GM12878 (cell line): ENCODE measurements at regions of chr6 and their contacts with region 1.

Region 1: DNA sequence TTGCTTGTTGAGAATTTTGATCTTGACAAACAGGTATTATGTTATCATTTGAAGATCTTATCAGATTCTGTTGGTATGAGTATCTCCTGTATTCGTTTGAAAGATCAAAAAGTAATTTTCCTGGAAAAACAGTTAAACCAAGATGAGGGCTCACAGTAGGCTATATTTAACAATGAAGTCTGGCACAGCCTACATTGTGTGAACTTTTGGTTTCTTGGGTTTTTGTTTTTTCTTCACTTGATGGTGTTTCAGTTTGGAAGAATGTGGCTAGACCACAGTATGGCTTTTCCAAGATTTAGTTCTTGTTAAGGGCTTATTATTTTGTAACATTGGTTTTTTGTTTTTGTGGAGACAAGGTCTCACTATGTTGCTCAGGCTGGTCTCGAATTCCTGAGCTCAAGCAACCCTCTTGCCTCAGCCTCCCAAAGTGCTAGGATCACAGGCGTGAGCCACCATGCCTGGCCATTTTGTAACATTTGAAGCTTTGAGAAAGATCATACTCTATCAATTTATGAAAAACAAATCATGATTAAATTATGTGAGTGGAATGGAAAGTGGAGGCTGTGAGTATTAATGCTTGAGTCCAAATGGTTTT is 306.5 kb downstream of the CDKAL1 start:
- DNase-seq: no peak
- ATAC-seq: no peak
- H3K4me3 ChIP-seq: no peak overlapping the region
- H3K27ac ChIP-seq: no peak overlapping the region
- H3K4me1 ChIP-seq: no peaks in the 10 kb centered on the region
- H3K27me3 ChIP-seq: no peaks in the 10 kb centered on the region
- CTCF ChIP-seq: no peak
- EP300 ChIP-seq: no peak
- POLR2A ChIP-seq: no peak
- RAD21 ChIP-seq: no peak

Region 2: DNA sequence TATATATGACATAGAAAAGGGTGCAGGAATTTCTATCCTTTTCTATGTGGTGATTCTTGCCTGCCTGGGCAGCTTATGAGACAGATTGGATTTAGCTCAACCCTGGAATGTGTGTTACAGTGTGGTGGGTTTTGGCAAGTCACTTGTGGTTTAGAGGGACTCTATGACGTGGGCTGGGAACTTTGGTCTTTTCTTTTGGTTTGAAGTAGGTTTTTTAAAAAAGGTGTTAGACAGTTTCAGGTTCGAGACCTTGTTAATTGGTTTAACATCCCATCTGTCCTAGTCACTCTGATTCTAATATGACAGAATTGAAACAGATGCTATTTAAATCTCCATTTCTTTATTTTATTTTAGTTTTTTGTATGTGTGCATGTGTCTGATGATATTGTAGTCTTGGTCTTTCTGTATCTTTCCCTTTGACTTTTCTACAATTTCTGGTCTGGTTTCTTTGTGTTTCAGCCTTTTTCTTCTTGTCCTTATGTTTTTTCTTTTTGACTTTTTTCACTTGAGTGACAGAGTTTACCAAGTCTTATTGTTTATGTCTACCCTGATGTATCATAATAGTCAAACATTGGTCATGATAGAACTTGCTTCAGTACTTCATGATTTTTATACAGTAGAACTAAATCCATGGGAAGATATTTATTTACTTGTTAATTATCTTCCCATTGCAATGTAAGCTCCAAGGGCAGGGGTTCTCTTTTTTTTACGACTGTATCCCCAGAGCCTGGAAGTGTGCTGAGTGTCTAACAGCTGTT is 132.2 kb before region 1 on chr6:
- CTCF ChIA-PET with region 1: interaction called, 3 read pairs
- POLR2A ChIA-PET with region 1: no interaction called
- RAD21 ChIA-PET with region 1: no interaction called
- SMC1A ChIA-PET with region 1: interaction called, 5 read pairs
- in situ Hi-C with region 1: no loop called
- intact Hi-C with region 1: loop called (anchors 1 kb)
- DNase-seq: peak; percentile 59
- ATAC-seq: peak; percentile 87
- H3K4me3 ChIP-seq: no peak overlapping the region
- H3K27ac ChIP-seq: peak overlapping the region; percentile 20
- H3K4me1 ChIP-seq: peaks cover 13% of the 10 kb centered on the region
- H3K27me3 ChIP-seq: no peaks in the 10 kb centered on the region
- CTCF ChIP-seq: no peak
- EP300 ChIP-seq: peak; percentile 98 to 99
- POLR2A ChIP-seq: no peak
- RAD21 ChIP-seq: no peak

Region 3: GRCh38 chr6:20850687-20851416 is 10.1 kb after region 1 on chr6:
- CTCF ChIA-PET with region 1: interaction called, 3 read pairs
- POLR2A ChIA-PET with region 1: no interaction called
- RAD21 ChIA-PET with region 1: interaction called, 3 read pairs
- SMC1A ChIA-PET with region 1: interaction called, 13 read pairs
- in situ Hi-C with region 1: no loop called
- intact Hi-C with region 1: no loop called
- DNase-seq: no peak
- ATAC-seq: no peak
- H3K4me3 ChIP-seq: no peak overlapping the region
- H3K27ac ChIP-seq: no peak overlapping the region
- H3K4me1 ChIP-seq: no peaks in the 10 kb centered on the region
- H3K27me3 ChIP-seq: no peaks in the 10 kb centered on the region
- CTCF ChIP-seq: no peak
- EP300 ChIP-seq: no peak
- POLR2A ChIP-seq: no peak
- RAD21 ChIP-seq: no peak